GM12878 (cell line): ENCODE measurements at regions of chr7 and their contacts with region 1.

Region 1: DNA sequence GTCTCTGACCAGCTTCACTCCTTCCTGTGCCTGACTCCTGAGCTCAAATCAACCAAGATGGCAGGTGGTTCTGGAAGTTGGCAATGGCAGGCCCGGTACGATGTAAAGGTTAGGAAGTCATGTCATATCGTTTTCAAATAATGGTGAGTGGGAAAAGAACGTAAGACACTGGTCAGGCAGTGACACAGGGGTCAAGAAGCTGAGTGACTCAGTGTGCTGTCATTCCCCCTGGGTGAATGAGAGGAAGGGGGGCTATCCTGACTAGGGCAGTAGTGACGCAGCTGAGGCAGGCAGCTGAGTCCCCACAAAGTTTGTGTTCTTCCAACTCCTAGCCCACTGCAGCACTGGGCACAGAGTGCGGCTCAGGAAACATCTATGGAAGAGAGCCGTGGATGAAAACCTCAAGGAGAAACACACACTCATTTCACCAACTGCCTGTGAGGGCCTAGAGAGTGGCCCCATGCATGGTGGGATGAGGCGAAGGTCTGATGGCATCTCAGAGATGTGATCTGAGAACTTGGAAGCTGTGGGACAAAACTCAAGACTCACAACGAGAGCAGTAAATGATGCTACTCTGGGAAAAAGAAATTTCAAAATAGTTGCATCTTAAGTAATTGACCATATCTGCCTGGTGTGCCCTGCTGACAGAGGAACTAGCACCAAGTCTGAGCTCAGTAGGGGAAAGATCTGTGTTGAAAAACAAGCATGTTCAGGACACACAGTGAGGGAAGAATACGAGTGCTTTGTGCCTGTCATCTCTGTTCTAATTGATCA is 23.2 kb downstream of the CREB3L2 start:
- DNase-seq: no peak
- ATAC-seq: no peak
- H3K4me3 ChIP-seq: no peak overlapping the region
- H3K27ac ChIP-seq: peak overlapping the region; percentile 9; the same call in 1 of the 2 replicates
- H3K4me1 ChIP-seq: peaks cover 69% of the 10 kb centered on the region
- H3K27me3 ChIP-seq: no peaks in the 10 kb centered on the region
- CTCF ChIP-seq: no peak
- EP300 ChIP-seq: no peak
- POLR2A ChIP-seq: no peak
- RAD21 ChIP-seq: no peak

Region 2: GRCh38 chr7:137961200-137962177 is 17.2 kb before region 1 on chr7:
- CTCF ChIA-PET with region 1: interaction called, 5 read pairs
- POLR2A ChIA-PET with region 1: interaction called, 5 read pairs
- RAD21 ChIA-PET with region 1: interaction called, 9 read pairs
- SMC1A ChIA-PET with region 1: interaction called, 18 read pairs
- in situ Hi-C with region 1: no loop called
- intact Hi-C with region 1: no loop called
- DNase-seq: no peak
- ATAC-seq: peak; percentile 90
- H3K4me3 ChIP-seq: no peak overlapping the region
- H3K27ac ChIP-seq: peak overlapping the region; percentile 14
- H3K4me1 ChIP-seq: peaks cover 30% of the 10 kb centered on the region
- H3K27me3 ChIP-seq: no peaks in the 10 kb centered on the region
- CTCF ChIP-seq: no peak
- EP300 ChIP-seq: no peak
- POLR2A ChIP-seq: no peak
- RAD21 ChIP-seq: no peak

Region 3: GRCh38 chr7:137992550-137993394 is 14.1 kb after region 1 on chr7:
- CTCF ChIA-PET with region 1: interaction called, 271 read pairs
- POLR2A ChIA-PET with region 1: interaction called, 127 read pairs
- RAD21 ChIA-PET with region 1: interaction called, 148 read pairs
- SMC1A ChIA-PET with region 1: interaction called, 516 read pairs
- in situ Hi-C with region 1: no loop called
- intact Hi-C with region 1: no loop called
- DNase-seq: no peak
- ATAC-seq: peak; percentile 76
- H3K4me3 ChIP-seq: peak overlapping the region; percentile 26; the same call in 1 of the 2 replicates
- H3K27ac ChIP-seq: peak overlapping the region; percentile 43
- H3K4me1 ChIP-seq: peaks cover 55% of the 10 kb centered on the region
- H3K27me3 ChIP-seq: no peaks in the 10 kb centered on the region
- CTCF ChIP-seq: no peak
- EP300 ChIP-seq: peak; percentile 6 to 70; a peak in 2 of 4 replicates
- POLR2A ChIP-seq: no peak
- RAD21 ChIP-seq: no peak

Region 4: GRCh38 chr7:138044897-138045296 is 66.2 kb after region 1 on chr7:
- CTCF ChIA-PET with region 1: no interaction called
- POLR2A ChIA-PET with region 1: no interaction called
- RAD21 ChIA-PET with region 1: no interaction called
- SMC1A ChIA-PET with region 1: no interaction called
- in situ Hi-C with region 1: no loop called
- intact Hi-C with region 1: no loop called
- DNase-seq: no peak
- ATAC-seq: no peak
- H3K4me3 ChIP-seq: no peak overlapping the region
- H3K27ac ChIP-seq: no peak overlapping the region
- H3K4me1 ChIP-seq: no peaks in the 10 kb centered on the region
- H3K27me3 ChIP-seq: no peaks in the 10 kb centered on the region
- CTCF ChIP-seq: no peak
- EP300 ChIP-seq: no peak
- POLR2A ChIP-seq: no peak
- RAD21 ChIP-seq: no peak

Region 5: DNA sequence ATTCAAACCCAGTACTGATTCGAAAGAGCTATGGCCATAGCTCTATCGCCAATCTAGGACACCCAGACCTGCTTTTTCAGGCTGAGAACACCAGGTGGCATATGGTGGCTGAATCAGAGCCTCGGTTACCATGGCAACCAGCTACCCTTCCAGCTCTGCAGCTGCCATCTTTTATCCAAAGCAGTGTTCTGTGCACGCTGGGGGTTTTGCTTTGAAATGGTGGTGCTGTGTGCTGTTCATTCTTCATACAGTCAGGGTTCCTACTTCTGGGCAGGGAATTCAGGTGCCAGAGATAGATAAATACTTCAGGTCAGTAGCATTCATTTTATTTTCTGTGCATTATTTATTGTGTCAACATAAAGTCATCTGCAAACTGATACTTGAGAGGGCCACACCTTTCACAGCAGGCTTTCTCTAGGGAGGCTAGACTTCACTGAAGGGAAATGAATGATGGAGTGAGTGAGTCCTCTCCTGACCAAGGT is 183.0 kb after region 1 on chr7:
- CTCF ChIA-PET with region 1: no interaction called
- POLR2A ChIA-PET with region 1: no interaction called
- RAD21 ChIA-PET with region 1: no interaction called
- SMC1A ChIA-PET with region 1: no interaction called
- in situ Hi-C with region 1: no loop called
- intact Hi-C with region 1: no loop called
- DNase-seq: peak; percentile 76
- ATAC-seq: peak; percentile 100
- H3K4me3 ChIP-seq: no peak overlapping the region
- H3K27ac ChIP-seq: no peak overlapping the region
- H3K4me1 ChIP-seq: peaks cover 5% of the 10 kb centered on the region
- H3K27me3 ChIP-seq: no peaks in the 10 kb centered on the region
- CTCF ChIP-seq: peak; percentile 70 to 91 (median 85)
- EP300 ChIP-seq: no peak
- POLR2A ChIP-seq: no peak
- RAD21 ChIP-seq: peak; percentile 81

Region 6: DNA sequence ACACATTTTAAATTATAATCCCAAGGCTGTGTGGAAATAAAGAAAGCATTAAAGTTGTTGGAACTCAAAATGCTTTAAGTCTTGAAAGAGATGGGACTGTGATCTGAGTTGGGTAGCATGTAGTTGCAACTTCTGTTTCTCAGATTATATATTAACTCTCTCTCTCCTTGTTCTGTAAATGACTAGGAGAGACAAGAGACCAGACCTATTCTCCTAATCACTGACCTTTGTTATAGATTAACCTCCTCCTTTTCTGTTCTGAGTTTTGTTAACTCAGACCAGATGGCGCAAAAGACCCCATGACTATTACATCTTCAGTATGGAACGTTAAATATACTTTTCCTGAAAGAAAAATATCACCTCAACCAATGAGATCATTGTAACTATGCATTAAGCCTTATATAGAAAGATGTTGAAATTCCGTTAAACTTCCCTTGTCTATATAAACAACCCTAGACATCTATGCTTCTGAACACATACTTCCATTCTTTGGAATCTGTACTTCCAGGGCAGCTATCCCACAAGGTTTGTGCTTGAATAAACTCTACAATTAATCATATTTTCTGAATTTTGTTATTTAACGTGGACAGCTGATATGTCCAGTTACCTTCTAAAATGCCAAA is 337.9 kb after region 1 on chr7:
- CTCF ChIA-PET with region 1: no interaction called
- POLR2A ChIA-PET with region 1: no interaction called
- RAD21 ChIA-PET with region 1: no interaction called
- SMC1A ChIA-PET with region 1: no interaction called
- in situ Hi-C with region 1: no loop called
- intact Hi-C with region 1: no loop called
- DNase-seq: peak; percentile 17
- ATAC-seq: peak; percentile 94
- H3K4me3 ChIP-seq: no peak overlapping the region
- H3K27ac ChIP-seq: no peak overlapping the region
- H3K4me1 ChIP-seq: no peaks in the 10 kb centered on the region
- H3K27me3 ChIP-seq: no peaks in the 10 kb centered on the region
- CTCF ChIP-seq: no peak
- EP300 ChIP-seq: no peak
- POLR2A ChIP-seq: no peak
- RAD21 ChIP-seq: no peak